Endothelial cell of umbilical vein (primary cell): ENCODE measurements at regions of chr5 and their contacts with region 1.

Region 1: GRCh38 chr5:141430332-141431113 is at the start of gene PCDHGA12:
- DNase-seq: peak; percentile 87
- H3K4me3 ChIP-seq: peak within 1 kb of the TSS; percentile 30 to 67 (median 40)
- H3K27ac ChIP-seq: peak within 1 kb of the TSS; percentile 10
- H3K4me1 ChIP-seq: peaks cover 17% of the 10 kb centered on the region
- H3K27me3 ChIP-seq: peaks cover 25 to 48% of the 10 kb centered on the region in 2 experiments
- CTCF ChIP-seq: peak; percentile 45 to 69
- POLR2A ChIP-seq: no peak
- total RNA-seq, gene PCDHGA12: 7.6 and 9.9 TPM in 2 replicates

Region 2: GRCh38 chr5:141326088-141326854 is 104.3 kb before region 1 on chr5:
- CTCF ChIA-PET with region 1: interaction called, 12 read pairs
- POLR2A ChIA-PET with region 1: no interaction called
- dilution Hi-C with region 1: no loop called
- intact Hi-C with region 1: no loop called
- DNase-seq: peak; percentile 77
- H3K4me3 ChIP-seq: peak overlapping the region; percentile 27 to 74 (median 50)
- H3K27ac ChIP-seq: no peak overlapping the region
- H3K4me1 ChIP-seq: no peaks in the 10 kb centered on the region
- H3K27me3 ChIP-seq: peaks cover 14 to 31% of the 10 kb centered on the region in 2 experiments
- CTCF ChIP-seq: peak; percentile 65 to 70
- POLR2A ChIP-seq: no peak

Region 3: GRCh38 chr5:141402553-141403260 is 27.8 kb before region 1 on chr5 and contains the start of gene PCDHGA9:
- CTCF ChIA-PET with region 1: interaction called, 23 read pairs
- POLR2A ChIA-PET with region 1: no interaction called
- dilution Hi-C with region 1: no loop called
- intact Hi-C with region 1: no loop called
- DNase-seq: no peak
- H3K4me3 ChIP-seq: peak within 1 kb of the TSS in 2 of 3 experiments; percentile 9 to 28
- H3K27ac ChIP-seq: no peak within 1 kb of the TSS
- H3K4me1 ChIP-seq: peaks cover 2% of the 10 kb centered on the region
- H3K27me3 ChIP-seq: peaks cover 47 to 68% of the 10 kb centered on the region in 2 experiments
- CTCF ChIP-seq: peak; percentile 37 to 57
- POLR2A ChIP-seq: no peak
- total RNA-seq, gene PCDHGA9: 3.5 and 3.9 TPM in 2 replicates

Region 4: GRCh38 chr5:141484641-141485311 is 54.3 kb after region 1 on chr5 and contains the start of gene PCDHGC4:
- CTCF ChIA-PET with region 1: interaction called, 25 read pairs
- POLR2A ChIA-PET with region 1: no interaction called
- dilution Hi-C with region 1: no loop called
- intact Hi-C with region 1: no loop called
- DNase-seq: peak; percentile 60
- H3K4me3 ChIP-seq: peak within 1 kb of the TSS in 2 of 3 experiments; percentile 19 to 46
- H3K27ac ChIP-seq: no peak within 1 kb of the TSS
- H3K4me1 ChIP-seq: peaks cover 10% of the 10 kb centered on the region
- H3K27me3 ChIP-seq: peaks cover 5 to 17% of the 10 kb centered on the region in 2 experiments
- CTCF ChIP-seq: no peak
- POLR2A ChIP-seq: no peak
- total RNA-seq, gene PCDHGC4: 0.90 and 2.1 TPM in 2 replicates

Region 5: GRCh38 chr5:141524604-141525597 is 94.4 kb after region 1 on chr5:
- CTCF ChIA-PET with region 1: interaction called, 308 read pairs
- POLR2A ChIA-PET with region 1: interaction called, 5 read pairs
- dilution Hi-C with region 1: no loop called
- intact Hi-C with region 1: loop called (anchors 1 kb)
- DNase-seq: peak; percentile 96
- H3K4me3 ChIP-seq: no peak overlapping the region
- H3K27ac ChIP-seq: peak overlapping the region; percentile 22
- H3K4me1 ChIP-seq: peaks cover 29% of the 10 kb centered on the region
- H3K27me3 ChIP-seq: no peaks in the 10 kb centered on the region
- CTCF ChIP-seq: peak; percentile 99 to 100
- POLR2A ChIP-seq: no peak

Region 6: DNA sequence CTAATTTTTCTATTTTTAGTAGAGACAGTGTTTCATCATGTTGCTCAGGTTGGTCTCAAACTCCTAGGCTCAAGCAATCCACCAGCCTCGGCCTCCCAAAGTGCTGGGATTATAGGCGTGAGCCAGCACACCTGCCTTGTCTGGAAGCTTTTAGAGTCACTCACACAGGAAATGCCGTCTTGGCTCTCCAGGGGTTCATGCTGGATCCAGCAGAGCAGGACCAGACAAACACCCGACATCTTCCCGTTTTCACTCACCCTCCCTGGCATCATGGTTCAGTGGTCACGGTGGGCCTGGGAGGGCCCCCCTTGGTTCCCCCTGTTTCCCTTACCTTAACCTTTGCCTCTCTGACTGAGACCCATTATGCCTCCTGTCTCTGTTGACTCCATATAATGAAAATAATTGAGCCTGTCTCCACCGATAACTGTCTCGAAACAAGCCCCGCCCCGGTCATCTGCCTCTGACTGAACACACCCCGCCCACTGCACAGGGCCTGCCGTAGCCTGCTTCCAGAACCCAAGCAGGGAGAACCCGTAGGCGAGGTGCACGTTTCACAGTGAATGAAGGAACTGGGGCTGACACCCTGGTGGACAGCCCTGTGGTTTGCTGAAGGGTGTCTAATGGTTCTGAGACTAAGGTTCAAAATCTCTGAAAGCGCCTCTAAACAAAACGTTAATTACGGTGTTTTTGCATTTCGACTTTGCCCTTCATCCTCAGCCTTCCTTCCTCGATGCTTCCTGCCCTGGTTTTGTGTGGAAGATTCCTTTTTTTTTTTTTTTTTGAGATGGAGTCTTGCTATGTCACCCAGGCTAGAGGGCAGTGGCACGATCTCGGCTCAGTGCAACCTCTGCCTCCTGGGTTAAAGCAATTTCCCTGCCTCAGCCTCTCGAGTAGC is 934.0 kb after region 1 on chr5:
- CTCF ChIA-PET with region 1: no interaction called
- POLR2A ChIA-PET with region 1: no interaction called
- dilution Hi-C with region 1: no loop called
- intact Hi-C with region 1: no loop called
- DNase-seq: no peak
- H3K4me3 ChIP-seq: no peak overlapping the region
- H3K27ac ChIP-seq: no peak overlapping the region
- H3K4me1 ChIP-seq: peaks cover 25% of the 10 kb centered on the region
- H3K27me3 ChIP-seq: no peaks in the 10 kb centered on the region
- CTCF ChIP-seq: no peak
- POLR2A ChIP-seq: no peak